ENCODE measurements at regions of chr1 and their contacts with region 1.

Region 1: GRCh38 chr1:26083246-26083645 is 15.8 kb upstream of the TRIM63 start:
- DNase-seq: peak; percentile 52
- ATAC-seq: peak; percentile 57
- H3K4me3 ChIP-seq: no peak overlapping the region
- H3K27ac ChIP-seq: no peak overlapping the region
- H3K4me1 ChIP-seq: peaks cover 26% of the 10 kb centered on the region
- H3K27me3 ChIP-seq: no peaks in the 10 kb centered on the region
- CTCF ChIP-seq: no peak

Region 2: DNA sequence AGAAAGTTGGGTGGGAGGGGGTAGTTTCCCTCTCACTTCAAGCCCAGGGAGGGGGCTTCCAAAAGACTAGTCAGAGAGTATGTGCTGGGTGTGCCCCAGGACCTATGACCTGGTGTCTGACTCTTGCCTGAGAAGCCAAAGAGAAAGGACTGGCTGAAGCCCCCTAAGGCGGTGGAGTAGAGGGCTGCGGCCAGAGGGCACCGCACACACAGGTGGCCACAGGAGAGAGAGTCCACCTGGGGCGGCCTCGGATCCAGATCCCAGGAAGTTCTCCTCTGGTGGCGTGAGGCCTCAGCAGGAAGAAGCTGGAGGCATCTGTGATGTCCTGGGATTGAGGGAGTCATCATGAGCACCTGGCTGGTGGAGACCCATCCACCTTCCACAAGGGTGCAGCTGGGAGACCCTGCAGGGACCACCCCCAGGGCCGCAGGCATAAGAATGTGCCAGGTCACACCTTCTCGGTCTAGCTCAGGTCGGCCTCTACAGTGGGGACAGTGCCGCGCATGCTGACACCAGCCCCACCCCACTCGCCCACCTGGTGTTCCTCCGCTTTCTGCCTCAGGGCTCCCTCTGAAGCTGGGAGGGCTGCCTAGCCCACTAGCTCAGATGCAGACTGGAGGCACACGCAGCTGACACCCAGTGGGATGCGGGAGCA is 202.1 kb before region 1 on chr1:
- CTCF ChIA-PET with region 1: no interaction called
- POLR2A ChIA-PET with region 1: no interaction called
- intact Hi-C with region 1: no loop called
- DNase-seq: no peak
- ATAC-seq: no peak
- H3K4me3 ChIP-seq: no peak overlapping the region
- H3K27ac ChIP-seq: no peak overlapping the region
- H3K4me1 ChIP-seq: no peaks in the 10 kb centered on the region
- H3K27me3 ChIP-seq: no peaks in the 10 kb centered on the region
- CTCF ChIP-seq: no peak

Region 3: GRCh38 chr1:26053718-26054560 is 29.3 kb before region 1 on chr1:
- CTCF ChIA-PET with region 1: no interaction called
- POLR2A ChIA-PET with region 1: interaction called, 14 read pairs
- intact Hi-C with region 1: no loop called
- DNase-seq: no peak
- ATAC-seq: no peak
- H3K4me3 ChIP-seq: no peak overlapping the region
- H3K27ac ChIP-seq: no peak overlapping the region
- H3K4me1 ChIP-seq: no peaks in the 10 kb centered on the region
- H3K27me3 ChIP-seq: no peaks in the 10 kb centered on the region
- CTCF ChIP-seq: no peak

Region 4: GRCh38 chr1:26378088-26378878 is 295.0 kb after region 1 on chr1:
- CTCF ChIA-PET with region 1: no interaction called
- POLR2A ChIA-PET with region 1: interaction called, 10 read pairs
- intact Hi-C with region 1: no loop called
- DNase-seq: peak; percentile 94
- ATAC-seq: peak; percentile 88
- H3K4me3 ChIP-seq: no peak overlapping the region; the same call in 1 of the 2 replicates
- H3K27ac ChIP-seq: peak overlapping the region; percentile 76
- H3K4me1 ChIP-seq: peaks cover 16% of the 10 kb centered on the region
- H3K27me3 ChIP-seq: no peaks in the 10 kb centered on the region
- CTCF ChIP-seq: no peak

Region 5: GRCh38 chr1:27785781-27786455 is 1702.7 kb after region 1 on chr1:
- CTCF ChIA-PET with region 1: no interaction called
- POLR2A ChIA-PET with region 1: no interaction called
- intact Hi-C with region 1: no loop called
- DNase-seq: peak; percentile 39
- ATAC-seq: peak; percentile 55
- H3K4me3 ChIP-seq: no peak overlapping the region
- H3K27ac ChIP-seq: no peak overlapping the region
- H3K4me1 ChIP-seq: peaks cover 11% of the 10 kb centered on the region; the same call in 1 of the 2 replicates
- H3K27me3 ChIP-seq: no peaks in the 10 kb centered on the region
- CTCF ChIP-seq: no peak